ENCODE measurements at regions of chr22 and their contacts with region 1.

Region 1: DNA sequence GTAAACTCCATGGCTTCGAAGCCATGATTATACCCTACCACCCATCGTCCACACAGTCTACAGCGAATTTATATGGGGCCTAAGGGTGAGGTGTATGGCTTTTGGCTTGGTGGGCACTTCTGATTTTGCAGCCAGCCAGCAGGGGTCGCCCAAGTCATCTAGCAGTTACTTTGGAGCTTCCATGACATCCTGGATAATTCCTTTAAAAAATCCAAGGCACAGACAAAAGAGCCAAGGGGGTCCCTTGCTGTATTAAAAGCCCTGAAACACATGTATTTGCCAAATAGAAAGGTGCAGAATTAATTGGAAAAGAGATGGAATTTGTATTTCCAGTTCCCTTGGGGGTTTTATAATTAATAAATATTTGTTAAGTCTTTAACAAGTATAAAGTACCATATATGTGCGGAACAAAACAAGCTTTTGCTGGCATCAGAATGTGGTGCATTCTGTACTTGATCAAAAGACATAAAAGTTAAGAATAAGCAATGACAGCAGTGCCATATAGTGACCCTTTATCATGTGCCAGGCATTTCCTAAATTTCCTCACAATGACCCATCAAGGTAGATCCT is 132.8 kb upstream of the PITPNB start:
- DNase-seq: peak in 1 of 2 experiments; percentile 46
- H3K4me3 ChIP-seq: no peak overlapping the region
- H3K27ac ChIP-seq: no peak overlapping the region
- H3K4me1 ChIP-seq: no peaks in the 10 kb centered on the region
- H3K27me3 ChIP-seq: no peaks in the 10 kb centered on the region
- CTCF ChIP-seq: peak; percentile 93

Region 2: DNA sequence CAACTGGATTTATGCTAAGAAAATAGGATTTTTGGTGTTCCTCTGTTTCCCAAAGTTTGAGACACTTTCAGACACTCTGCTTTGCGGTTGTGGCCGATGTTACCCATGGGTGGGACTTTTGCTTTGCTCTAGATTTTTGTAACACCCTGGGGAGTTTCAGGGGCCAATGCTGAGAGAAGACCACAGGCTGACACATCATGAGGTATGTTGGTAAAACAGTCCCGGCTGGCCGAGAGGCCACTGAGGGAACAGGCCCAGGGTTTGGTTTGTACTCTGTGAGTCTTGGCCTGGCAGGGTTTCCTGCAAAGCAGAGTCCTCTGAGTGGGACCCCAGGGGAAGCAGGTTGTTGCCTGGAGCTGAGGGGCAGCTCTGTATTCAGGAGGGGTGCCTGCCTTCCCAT is 54.3 kb before region 1 on chr22:
- CTCF ChIA-PET with region 1: no interaction called
- POLR2A ChIA-PET with region 1: no interaction called
- intact Hi-C with region 1: no loop called
- DNase-seq: no peak
- H3K4me3 ChIP-seq: no peak overlapping the region
- H3K27ac ChIP-seq: no peak overlapping the region
- H3K4me1 ChIP-seq: peaks cover 4% of the 10 kb centered on the region
- H3K27me3 ChIP-seq: no peaks in the 10 kb centered on the region
- CTCF ChIP-seq: no peak

Region 3: GRCh38 chr22:28442264-28442710 is 390.4 kb after region 1 on chr22:
- CTCF ChIA-PET with region 1: no interaction called
- POLR2A ChIA-PET with region 1: no interaction called
- intact Hi-C with region 1: loop called (anchors 2 kb)
- DNase-seq: peak; percentile 55 to 70
- H3K4me3 ChIP-seq: peak overlapping the region; percentile 59
- H3K27ac ChIP-seq: no peak overlapping the region
- H3K4me1 ChIP-seq: 0 out of 2 replicates have a peak, but pooled peaks cover 4% of the 10 kb centered on the region
- H3K27me3 ChIP-seq: no peaks in the 10 kb centered on the region
- CTCF ChIP-seq: peak; percentile 69

Region 4: DNA sequence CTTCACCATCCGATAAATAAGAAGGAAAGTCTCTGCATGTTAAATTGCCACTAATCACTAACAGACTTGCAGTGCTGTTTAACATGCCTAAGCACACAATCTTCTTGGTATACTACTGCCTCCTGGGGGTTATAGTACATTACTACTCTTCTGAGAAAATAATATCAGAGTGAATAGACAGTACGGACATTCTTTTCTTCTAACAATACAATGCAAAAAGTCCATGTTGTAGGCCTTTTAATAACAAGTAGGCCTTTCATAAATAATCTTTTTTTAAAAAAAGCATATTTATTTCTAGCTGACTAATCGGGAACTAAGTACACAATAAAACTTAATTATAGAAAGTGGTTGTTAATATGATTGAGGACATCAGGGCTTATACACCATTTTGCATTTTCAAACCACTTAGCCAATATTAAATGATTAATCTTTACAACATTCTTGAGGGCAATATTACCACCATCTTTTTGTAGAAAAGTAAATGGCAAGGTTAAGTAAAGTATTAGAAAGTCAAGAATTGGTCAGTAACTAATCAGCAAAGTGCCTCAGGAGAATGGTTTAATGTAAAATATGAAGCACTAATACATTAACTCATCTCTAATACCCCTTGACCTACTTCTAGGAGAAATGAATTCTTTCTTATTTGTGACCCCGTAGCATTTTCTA is 543.1 kb after region 1 on chr22:
- CTCF ChIA-PET with region 1: no interaction called
- POLR2A ChIA-PET with region 1: no interaction called
- intact Hi-C with region 1: loop called (anchors 2 kb)
- DNase-seq: peak in 1 of 2 experiments; percentile 36
- H3K4me3 ChIP-seq: no peak overlapping the region
- H3K27ac ChIP-seq: no peak overlapping the region
- H3K4me1 ChIP-seq: no peaks in the 10 kb centered on the region
- H3K27me3 ChIP-seq: no peaks in the 10 kb centered on the region
- CTCF ChIP-seq: peak; percentile 81